ENCODE measurements at regions of chr1 and their contacts with region 1.

Region 1: DNA sequence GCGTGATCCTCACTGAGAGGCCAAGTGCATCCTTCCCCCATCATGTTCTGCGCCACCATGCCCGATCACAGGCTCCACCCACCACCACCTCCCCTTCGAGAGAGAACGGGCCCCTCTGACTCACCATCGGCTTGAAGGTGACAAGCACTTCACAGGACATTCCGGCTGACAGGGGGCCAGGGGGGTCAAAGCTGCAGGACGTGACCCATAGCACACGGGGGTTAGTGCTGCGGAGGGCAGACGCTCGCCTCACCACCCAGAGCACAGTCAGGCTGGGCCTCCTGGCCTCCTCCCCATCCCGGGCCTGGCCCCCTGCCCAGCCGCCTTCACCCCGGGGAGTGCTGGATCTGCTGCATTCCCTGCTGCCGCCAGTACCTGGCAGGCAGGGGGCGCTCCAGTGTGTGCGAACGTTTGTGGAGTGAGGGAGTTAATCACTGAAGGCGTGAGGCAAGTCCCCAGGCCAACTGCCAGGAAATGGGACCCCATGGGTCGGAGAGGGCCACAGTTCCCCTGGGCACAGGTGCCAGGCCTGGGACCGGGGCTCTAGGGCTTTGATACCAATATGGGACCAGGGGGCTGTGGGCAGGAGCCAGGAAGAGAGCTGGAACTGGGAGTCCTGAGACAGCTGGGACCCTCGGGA is 40.9 kb upstream of the TMEM52 start:
- DNase-seq: peak; percentile 60 to 86
- ATAC-seq: peak; percentile 96

Region 2: DNA sequence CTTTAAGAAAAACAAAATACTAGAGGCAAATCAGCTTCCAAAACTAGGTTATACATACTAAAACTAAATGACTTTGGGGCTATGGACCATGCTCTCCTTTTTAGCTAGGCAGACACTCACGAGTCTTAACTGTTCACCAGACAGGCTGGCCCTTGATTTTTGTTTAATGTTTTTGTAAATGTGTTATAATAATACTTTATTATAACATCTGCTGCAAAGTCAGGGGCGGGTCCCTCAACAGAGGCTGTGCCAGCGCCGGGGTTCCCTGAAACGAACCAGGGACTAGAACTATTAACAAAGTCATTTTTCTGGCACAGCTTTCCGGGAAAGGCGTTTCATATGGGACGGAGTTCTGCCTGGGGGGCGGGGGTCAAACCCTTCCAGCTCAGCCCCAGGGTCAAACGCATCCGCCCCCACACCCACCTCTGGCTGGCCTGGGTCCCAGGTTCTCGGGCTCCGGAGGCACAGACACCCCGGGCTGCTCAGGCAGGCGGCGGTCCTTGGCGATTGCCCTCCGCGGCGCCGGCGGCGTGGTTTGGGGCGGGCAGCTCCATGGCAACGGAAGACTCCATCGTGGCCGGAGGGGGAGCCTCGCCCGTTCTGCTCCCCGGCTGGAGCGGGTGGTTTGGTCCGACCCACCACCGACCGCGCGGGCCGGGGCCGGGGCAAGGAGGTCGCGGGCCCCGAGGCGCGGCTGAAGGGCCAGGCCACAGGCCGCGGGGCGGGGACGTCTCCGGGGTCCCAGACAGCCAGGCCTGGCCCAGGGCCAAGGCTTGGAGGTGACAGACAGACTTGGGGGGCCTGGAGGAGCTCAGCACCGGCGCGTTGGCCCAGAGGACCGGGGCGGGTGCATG is 43.5 kb after region 1 on chr1 and contains the start of gene CFAP74:
- intact Hi-C with region 1: no loop called
- DNase-seq: peak in 1 of 2 donors; percentile 24
- ATAC-seq: peak; percentile 58
- total RNA-seq, gene CFAP74: not detected

Region 3: DNA sequence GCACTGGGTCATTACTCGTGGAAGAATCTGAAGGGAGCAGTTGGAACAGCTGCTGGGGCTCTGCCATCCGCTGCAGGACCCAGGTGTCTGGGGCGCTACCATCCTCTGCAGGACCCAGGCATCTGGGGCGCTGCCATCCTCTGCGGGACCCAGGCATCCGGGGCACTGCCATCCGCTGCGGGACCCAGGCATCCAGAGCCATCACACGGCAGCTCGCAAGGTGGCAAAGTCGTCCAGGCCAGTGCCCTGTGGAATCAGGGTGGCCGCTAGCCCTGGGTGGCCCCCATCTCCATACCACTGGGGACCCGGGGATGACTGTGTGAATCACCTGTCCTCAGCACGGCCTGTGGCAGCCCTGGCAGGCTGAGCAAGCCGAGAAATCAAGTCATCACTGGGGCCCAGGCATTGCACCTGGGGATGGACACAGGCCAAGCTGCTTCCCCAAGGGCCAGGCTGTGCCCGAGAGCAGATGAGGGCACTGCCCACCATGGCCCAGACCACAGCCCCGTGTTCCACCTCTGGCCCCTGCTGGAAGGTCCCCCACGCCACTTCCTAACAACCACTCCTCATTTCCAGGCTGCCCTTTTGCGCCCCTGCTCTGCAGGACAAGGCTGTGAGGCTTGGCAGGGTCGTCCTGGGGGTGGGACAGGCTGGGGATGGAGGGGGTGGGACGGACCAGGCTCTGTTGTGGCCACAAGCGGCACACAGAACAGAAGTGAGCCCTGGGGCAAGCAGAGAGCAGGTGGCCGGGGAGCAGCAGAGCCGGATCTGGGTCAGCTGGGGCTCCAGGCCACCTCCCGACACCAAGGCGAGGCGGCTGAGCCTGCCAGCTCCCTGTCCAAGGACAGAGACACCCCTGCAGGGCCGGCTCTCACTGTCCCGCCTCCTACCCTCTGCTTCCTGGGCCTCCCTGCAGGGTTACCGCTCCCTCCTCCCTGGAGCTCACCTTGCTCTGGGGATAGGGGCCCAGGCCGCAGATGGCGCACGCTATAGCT is 71.9 kb after region 1 on chr1:
- intact Hi-C with region 1: loop called in 1 of 2 experiments (anchors 10 kb)
- DNase-seq: no peak
- ATAC-seq: no peak

Region 4: DNA sequence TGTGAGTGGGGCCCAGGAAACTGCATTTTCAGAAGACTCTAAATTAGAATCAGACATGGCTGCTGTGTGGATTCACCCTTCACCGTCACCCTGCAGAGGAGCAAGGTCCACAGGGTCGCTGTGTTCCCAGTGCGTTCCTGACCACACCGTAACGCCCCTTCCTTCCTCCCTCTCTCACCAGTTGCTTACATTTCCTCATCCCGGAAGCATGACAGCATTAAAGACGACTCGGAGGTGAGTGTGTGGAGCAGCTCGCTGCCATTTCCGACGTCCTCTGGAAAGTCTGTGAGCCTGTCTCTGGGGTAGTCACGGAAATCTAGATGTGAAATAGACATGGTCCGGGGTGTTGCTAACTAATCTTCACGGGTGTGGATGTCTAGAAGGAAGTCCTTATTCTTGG is 188.7 kb after region 1 on chr1:
- intact Hi-C with region 1: no loop called
- DNase-seq: no peak
- ATAC-seq: peak; percentile 21